ENCODE measurements at regions of chr1 and their contacts with region 1.

Region 1: GRCh38 chr1:117671781-117672501 is 66.1 kb downstream of the TENT5C start:
- DNase-seq: no peak
- H3K4me3 ChIP-seq: no peak overlapping the region
- H3K27ac ChIP-seq: no peak overlapping the region
- H3K4me1 ChIP-seq: no peaks in the 10 kb centered on the region
- H3K27me3 ChIP-seq: no peaks in the 10 kb centered on the region
- CTCF ChIP-seq: no peak
- POLR2A ChIP-seq: no peak

Region 2: GRCh38 chr1:116987256-116987555 is 684.7 kb before region 1 on chr1:
- intact Hi-C with region 1: no loop called
- DNase-seq: no peak
- H3K4me3 ChIP-seq: no peak overlapping the region
- H3K27ac ChIP-seq: no peak overlapping the region
- H3K4me1 ChIP-seq: no peaks in the 10 kb centered on the region
- H3K27me3 ChIP-seq: no peaks in the 10 kb centered on the region
- CTCF ChIP-seq: no peak
- POLR2A ChIP-seq: no peak

Region 3: GRCh38 chr1:117631359-117632160 is 40.4 kb before region 1 on chr1:
- intact Hi-C with region 1: loop called (anchors 1 kb)
- DNase-seq: no peak
- H3K4me3 ChIP-seq: no peak overlapping the region
- H3K27ac ChIP-seq: no peak overlapping the region
- H3K4me1 ChIP-seq: no peaks in the 10 kb centered on the region
- H3K27me3 ChIP-seq: no peaks in the 10 kb centered on the region
- CTCF ChIP-seq: no peak
- POLR2A ChIP-seq: no peak